Heart left ventricle (tissue), 16 donors: ENCODE measurements at regions of chr5 and their contacts with region 1.

Region 1: DNA sequence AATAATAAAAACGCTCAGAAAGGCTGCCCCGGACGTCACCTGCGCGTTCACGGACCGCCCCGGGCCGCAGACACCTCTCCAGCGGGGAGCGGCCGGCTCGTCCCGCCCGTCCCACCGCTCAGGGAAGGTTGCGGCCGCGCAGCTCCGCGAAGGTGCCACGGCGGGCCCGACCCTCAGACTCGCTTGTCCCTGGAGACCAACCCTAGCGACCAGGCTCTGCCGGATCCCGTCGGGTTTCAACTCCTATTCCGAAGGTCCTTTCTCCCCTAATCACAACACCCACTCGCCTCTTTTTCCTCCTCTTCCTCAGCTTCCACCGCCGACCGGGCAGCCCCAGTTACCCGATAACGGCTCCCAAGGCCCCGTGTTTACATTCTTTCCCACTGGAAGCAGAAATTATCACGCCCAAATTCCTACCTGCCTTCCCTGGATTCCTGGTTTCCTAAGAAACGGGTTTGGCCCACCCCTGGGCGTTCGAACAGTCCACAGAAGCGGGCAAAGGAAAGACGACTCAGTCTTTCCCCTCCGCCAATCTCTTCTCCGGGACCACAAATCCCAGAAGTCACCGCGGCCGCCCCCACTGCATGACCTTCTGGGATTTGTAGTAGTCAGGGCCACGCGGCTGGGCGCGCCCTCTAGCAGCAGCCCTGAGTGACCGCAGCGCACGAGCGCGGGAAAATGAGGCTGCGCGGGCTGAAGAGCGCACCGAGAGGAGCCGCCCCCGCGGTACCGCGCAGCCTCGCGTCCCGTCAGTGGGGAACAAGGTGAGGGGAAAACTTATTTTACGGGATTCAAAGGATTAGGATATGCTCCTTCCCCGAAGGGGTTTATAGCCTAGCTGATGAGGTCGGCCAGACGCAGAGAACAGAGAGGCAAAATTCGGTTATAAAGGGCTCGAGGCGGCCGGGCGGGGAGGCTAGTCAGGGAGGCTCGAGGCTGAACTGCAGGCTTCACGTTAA is at the start of gene TTC33:
- DNase-seq: peak; percentile 95 to 97 (median 96)
- ATAC-seq: peak; percentile 98 to 99 (median 99)
- H3K4me3 ChIP-seq: peak within 1 kb of the TSS; percentile 57 to 98 (median 84)
- H3K27ac ChIP-seq: peak within 1 kb of the TSS; percentile 49 to 95 (median 90)
- H3K4me1 ChIP-seq: peaks cover 0 to 20% (median 11%) of the 10 kb centered on the region in 12 donors
- H3K27me3 ChIP-seq: no peaks in the 10 kb centered on the region
- CTCF ChIP-seq: peak; percentile 43 to 88 (median 75)
- POLR2A ChIP-seq: peak in 1 of 2 donors; percentile 59
- total RNA-seq, gene TTC33: 11.3 to 20.0 (median 14.2) TPM

Region 2: DNA sequence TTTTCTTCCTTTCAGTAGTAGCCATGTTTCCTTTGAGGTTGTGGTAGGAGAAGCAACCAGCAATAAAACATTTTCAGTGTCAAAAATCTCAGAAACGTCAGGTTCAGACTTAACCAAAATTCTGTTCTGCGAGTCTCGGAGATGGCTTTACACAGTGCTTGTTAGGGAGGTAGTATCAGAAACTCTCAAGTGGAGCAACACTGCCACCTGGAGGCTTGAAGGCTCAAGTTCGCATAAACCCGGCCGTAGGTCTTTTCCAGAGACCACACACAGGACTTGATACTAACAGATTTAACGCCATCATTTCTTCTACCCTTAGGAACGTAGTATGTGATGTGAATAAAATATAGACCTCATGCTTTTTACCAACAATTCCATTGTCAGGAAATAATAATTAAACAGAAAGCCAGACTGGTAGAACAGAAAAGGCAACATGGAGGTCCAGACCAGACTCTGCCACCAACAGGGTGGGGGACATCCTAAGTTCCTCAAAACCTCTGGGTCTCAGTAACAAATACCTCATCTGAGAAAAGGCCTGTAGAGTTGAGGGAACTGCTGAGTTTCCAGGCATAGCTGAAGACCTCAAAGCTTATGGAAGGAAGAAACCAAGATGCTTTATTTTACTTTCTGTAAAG is 67.4 kb before region 1 on chr5:
- intact Hi-C with region 1: no loop called
- DNase-seq: peak; percentile 76 to 88 (median 82)
- ATAC-seq: peak; percentile 84 to 92 (median 92)
- H3K4me3 ChIP-seq: peak overlapping the region in 8 of 12 donors; percentile 58 to 96 (median 86)
- H3K27ac ChIP-seq: peak overlapping the region in 10 of 12 donors; percentile 1 to 97 (median 54)
- H3K4me1 ChIP-seq: peaks cover 0 to 70% (median 22%) of the 10 kb centered on the region in 12 donors
- H3K27me3 ChIP-seq: no peaks in the 10 kb centered on the region
- CTCF ChIP-seq: peak; percentile 78 to 94 (median 86)
- POLR2A ChIP-seq: no peak

Region 3: GRCh38 chr5:40798012-40798855 is 42.5 kb after region 1 on chr5 and contains the start of gene PRKAA1:
- intact Hi-C with region 1: loop called in 1 of 10 experiments (anchors 1 kb)
- DNase-seq: peak; percentile 90 to 95 (median 92)
- ATAC-seq: peak; percentile 76 to 97 (median 94)
- H3K4me3 ChIP-seq: peak within 1 kb of the TSS; percentile 74 to 99 (median 92)
- H3K27ac ChIP-seq: peak within 1 kb of the TSS; percentile 84 to 98 (median 92)
- H3K4me1 ChIP-seq: peaks cover 0 to 38% (median 23%) of the 10 kb centered on the region in 12 donors
- H3K27me3 ChIP-seq: no peaks in the 10 kb centered on the region
- CTCF ChIP-seq: peak; percentile 57 to 90 (median 78)
- POLR2A ChIP-seq: peak in 1 of 2 donors; percentile 27
- total RNA-seq, gene PRKAA1: 36.4 to 53.3 (median 43.2) TPM

Region 4: DNA sequence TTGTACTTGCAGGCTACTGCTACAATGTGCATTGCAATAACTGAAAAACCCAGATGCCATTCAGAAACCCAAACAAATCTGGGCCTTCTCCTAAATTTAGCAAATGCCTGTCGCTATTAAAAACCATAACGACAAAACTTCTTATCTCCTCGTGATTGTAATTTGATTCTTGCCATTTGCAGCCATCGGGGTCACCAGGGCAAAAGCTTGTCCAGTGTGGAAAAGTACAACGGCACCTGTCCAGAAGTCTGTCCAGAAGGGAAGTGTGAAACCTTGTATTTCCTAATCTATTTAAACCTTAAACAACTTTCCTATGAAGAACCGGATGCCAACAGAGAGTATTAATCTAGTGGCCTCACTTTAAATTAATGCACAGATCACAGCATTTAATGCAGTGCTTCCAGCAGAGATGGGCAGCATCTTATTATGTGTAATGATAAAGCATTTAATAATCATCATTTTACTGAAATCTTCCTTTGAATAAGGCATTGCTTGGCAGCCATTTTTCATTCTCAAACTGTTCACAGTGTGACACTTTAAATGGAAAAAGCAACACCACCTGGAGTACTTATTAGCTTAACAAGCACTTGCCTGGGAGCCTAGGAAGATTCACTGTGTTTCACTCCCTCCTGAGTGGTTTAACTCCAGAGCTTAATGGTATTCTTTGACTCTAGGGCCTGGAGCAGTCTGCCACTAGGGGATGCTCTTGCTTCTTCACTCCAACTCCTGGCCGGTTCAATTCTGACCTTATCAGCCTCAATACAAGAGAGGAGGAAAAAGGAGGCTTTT is 148.7 kb after region 1 on chr5:
- intact Hi-C with region 1: no loop called
- DNase-seq: peak in 4 of 5 donors; percentile 63 to 67 (median 66)
- ATAC-seq: peak; percentile 93 to 96 (median 95)
- H3K4me3 ChIP-seq: no peak overlapping the region
- H3K27ac ChIP-seq: peak overlapping the region; percentile 23 to 69 (median 50)
- H3K4me1 ChIP-seq: peaks cover 0 to 20% (median 9%) of the 10 kb centered on the region in 12 donors
- H3K27me3 ChIP-seq: no peaks in the 10 kb centered on the region
- CTCF ChIP-seq: peak; percentile 75 to 97 (median 94)
- POLR2A ChIP-seq: no peak